ENCODE measurements at regions of chr17 and their contacts with region 1.

Region 1: DNA sequence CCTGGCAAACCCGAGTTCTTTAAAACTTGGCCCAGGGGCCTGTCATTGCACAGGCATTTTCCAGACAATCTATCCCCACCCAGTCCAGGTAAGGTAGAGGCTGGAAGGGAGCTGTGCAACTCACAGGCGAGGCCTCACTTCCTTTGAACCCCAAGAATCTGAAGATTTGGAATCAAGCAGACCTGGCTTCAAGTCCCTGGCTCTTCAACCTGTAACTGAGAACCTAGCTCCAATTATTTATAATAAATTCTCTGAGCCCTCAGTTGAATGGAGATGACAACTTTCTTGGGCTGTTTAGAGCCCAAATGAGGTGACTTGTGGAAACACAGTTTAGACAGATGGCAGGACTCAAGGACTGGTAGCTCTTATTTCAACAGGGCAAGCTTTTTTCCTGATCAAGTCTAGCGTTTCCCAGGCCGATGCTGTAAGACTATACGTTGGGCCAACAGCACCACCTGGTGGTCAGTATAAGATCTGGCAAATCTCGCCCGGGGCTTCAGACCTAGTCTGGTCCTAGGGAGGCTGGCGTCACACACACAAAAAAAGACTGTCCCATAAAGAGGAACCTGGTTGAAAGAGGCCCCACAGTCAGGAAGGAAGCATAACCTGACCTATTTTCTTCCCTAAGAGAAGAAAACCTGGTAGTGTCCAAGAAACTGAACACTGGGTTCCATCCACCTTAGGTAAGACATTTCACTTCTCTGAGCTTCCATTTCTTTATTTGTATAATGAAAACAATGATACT is 117.9 kb downstream of the C17orf67 start:
- DNase-seq: peak; percentile 79
- CTCF ChIP-seq: peak; percentile 88

Region 2: DNA sequence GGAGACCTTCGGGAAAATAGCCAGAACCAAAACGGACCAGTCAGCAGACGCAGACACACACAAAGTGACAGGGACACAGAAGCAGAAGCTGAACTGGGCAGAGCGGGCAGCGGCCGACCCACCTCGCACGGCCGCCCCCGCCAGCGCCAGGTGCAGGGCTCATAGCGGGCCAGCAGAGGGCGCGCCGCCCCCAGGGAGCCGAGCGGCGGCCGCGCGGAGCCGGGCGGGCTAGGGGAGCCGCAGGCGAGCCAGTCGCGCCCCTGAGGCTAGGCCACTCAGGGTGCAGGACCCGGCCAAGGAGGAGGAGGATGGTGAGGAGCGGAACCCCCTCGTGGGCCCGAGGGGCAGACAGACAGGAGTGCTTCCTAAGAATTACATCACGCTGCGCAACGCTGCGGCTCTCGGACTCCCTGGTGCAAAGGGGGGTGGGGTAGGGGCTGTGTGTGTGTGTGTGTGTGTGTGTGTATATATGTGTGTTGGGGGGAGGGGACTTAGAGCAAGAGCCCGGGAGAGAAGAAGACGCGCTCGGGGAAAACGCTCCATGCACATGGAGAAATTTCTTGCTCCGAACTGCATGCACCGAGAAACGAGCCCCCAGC is 123.2 kb before region 1 on chr17:
- CTCF ChIA-PET with region 1: interaction called, 44 read pairs
- POLR2A ChIA-PET with region 1: no interaction called
- DNase-seq: peak; percentile 86
- CTCF ChIP-seq: peak; percentile 94

Region 3: GRCh38 chr17:56678249-56679114 is 37.3 kb before region 1 on chr17:
- CTCF ChIA-PET with region 1: interaction called, 10 read pairs
- POLR2A ChIA-PET with region 1: no interaction called
- DNase-seq: no peak
- CTCF ChIP-seq: no peak

Region 4: DNA sequence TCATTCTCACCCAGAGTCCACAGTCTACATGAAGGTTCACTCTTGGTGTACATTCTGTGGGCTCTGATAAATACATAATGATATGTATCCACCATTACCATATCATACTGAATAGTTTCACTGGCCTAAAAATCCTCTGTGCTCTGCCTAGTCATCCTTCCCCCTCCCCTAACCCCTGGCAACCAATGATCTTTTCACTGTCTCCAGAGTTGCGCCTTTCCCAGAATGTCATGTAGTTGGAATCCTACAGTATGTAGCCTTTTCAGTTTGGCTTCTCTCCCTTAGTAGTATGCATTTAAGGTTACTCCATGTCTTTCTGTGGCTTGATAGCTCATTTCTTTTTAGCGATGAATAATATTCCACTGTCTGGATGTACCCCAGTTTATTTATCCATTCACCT is 21.0 kb before region 1 on chr17:
- CTCF ChIA-PET with region 1: interaction called, 26 read pairs
- POLR2A ChIA-PET with region 1: no interaction called
- DNase-seq: no peak
- CTCF ChIP-seq: no peak

Region 5: GRCh38 chr17:56779898-56780733 is 64.3 kb after region 1 on chr17:
- CTCF ChIA-PET with region 1: interaction called, 13 read pairs
- POLR2A ChIA-PET with region 1: no interaction called
- DNase-seq: peak; percentile 88
- CTCF ChIP-seq: peak; percentile 97